Right lobe of liver (tissue), 6 donors: ENCODE measurements at regions of chr2 and their contacts with region 1.

Region 1: GRCh38 chr2:105369747-105370690 is 28.8 kb downstream of the FHL2 start:
- DNase-seq: peak; percentile 81 to 86 (median 82)
- ATAC-seq: peak; percentile 97 to 98 (median 98)
- H3K4me3 ChIP-seq: no peak overlapping the region
- H3K27ac ChIP-seq: no peak overlapping the region
- H3K4me1 ChIP-seq: peaks cover 0 to 6% (median 0%) of the 10 kb centered on the region in 4 donors
- H3K27me3 ChIP-seq: no peaks in the 10 kb centered on the region
- CTCF ChIP-seq: peak; percentile 89 to 95 (median 92)
- POLR2A ChIP-seq: no peak

Region 2: DNA sequence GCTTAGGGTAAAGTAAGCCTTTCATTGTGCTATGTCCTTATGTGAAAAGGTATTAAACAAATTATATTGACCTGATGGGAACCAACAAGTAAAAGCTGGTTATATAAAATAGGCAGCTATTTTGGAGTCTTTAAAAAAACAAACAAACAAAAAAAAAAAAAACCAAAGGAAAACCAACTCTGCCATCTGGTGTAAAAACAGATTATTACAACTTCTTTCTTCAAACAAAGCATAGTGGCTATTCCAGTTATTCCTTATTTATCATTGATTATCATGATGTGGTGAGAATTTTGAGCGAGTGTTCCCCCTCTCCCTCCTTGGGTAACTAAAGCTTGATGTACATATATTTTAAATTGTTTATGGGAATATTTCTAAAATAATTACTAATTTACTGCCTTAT is 151.2 kb after region 1 on chr2:
- intact Hi-C with region 1: loop called (anchors 5 kb)
- DNase-seq: no peak
- ATAC-seq: peak in 1 of 4 donors; percentile 11
- H3K4me3 ChIP-seq: no peak overlapping the region
- H3K27ac ChIP-seq: no peak overlapping the region
- H3K4me1 ChIP-seq: peaks cover 0 to 20% (median 10%) of the 10 kb centered on the region in 4 donors
- H3K27me3 ChIP-seq: no peaks in the 10 kb centered on the region
- CTCF ChIP-seq: peak; percentile 51 to 63 (median 56)
- POLR2A ChIP-seq: no peak